Caco-2 (cell line): ENCODE measurements at regions of chr21 and their contacts with region 1.

Region 1: DNA sequence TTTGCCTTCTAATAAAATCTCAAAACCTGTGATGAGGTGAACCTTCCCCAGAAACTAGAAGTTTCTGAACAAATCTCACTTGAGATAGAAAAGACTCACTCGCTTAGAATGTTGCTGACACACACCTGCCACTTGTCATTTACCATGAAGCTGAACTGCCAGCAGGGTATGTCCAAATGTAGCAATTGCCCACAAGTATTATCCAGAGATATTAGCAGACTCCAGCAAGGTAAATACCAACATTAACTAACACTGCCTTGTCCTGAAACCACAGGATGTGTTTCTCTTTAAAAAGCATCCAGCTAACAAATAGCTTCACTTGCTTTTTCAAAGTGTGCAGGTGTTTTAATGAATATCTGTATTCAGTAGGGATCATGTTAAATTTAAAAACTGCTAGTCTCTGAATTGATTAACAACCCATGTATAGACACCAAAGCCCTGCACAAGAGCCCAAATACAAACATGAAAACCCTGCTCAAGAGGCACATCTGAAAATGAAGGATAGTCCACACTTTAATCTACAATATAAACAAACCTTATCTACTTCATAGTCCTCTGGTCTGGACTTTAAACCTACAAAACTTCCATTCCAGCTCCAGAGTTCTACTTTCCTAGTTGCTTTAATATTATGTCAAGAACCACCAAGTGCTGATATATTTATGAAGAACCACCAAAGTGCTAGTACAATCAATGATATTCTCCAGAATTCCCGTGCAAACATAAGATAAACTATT is 19.3 kb downstream of the KRTAP8-1 start:
- DNase-seq: peak; percentile 30 to 31
- H3K4me3 ChIP-seq: no peak overlapping the region
- H3K4me3 Mint-ChIP-seq: peak overlapping the region; percentile 53
- H3K27ac Mint-ChIP-seq: no peak overlapping the region
- H3K4me1 ChIP-seq: peaks cover 24% of the 10 kb centered on the region
- H3K4me1 Mint-ChIP-seq: no peaks in the 10 kb centered on the region
- H3K27me3 ChIP-seq: no peaks in the 10 kb centered on the region
- H3K27me3 Mint-ChIP-seq: no peaks in the 10 kb centered on the region
- CTCF ChIP-seq: no peak

Region 2: GRCh38 chr21:30839304-30839703 is 45.6 kb after region 1 on chr21:
- CTCF ChIA-PET with region 1: no interaction called
- POLR2A ChIA-PET with region 1: no interaction called
- intact Hi-C with region 1: loop called (anchors 5 kb)
- DNase-seq: peak; percentile 54 to 60
- H3K4me3 ChIP-seq: no peak overlapping the region
- H3K4me3 Mint-ChIP-seq: no peak overlapping the region
- H3K27ac Mint-ChIP-seq: no peak overlapping the region
- H3K4me1 ChIP-seq: no peaks in the 10 kb centered on the region
- H3K4me1 Mint-ChIP-seq: no peaks in the 10 kb centered on the region
- H3K27me3 ChIP-seq: no peaks in the 10 kb centered on the region
- H3K27me3 Mint-ChIP-seq: peaks cover 2% of the 10 kb centered on the region
- CTCF ChIP-seq: peak; percentile 66 to 68